Activated T-helper 1 cell treated with anti-CD3 and anti-CD28 coated beads, Interleukin-12 subunit alpha, Interleukin-12 subunit beta, Interleukin-2, Interleukin-4 antibody, amounts not matched to agents 30 ng/mL and 10 ng/mL and 1 ng/mL, durations not matched to agents 14 hours and 24 hours and 36 hours (primary cell): ENCODE measurements at regions of chr9 and their contacts with region 1.

Region 1: DNA sequence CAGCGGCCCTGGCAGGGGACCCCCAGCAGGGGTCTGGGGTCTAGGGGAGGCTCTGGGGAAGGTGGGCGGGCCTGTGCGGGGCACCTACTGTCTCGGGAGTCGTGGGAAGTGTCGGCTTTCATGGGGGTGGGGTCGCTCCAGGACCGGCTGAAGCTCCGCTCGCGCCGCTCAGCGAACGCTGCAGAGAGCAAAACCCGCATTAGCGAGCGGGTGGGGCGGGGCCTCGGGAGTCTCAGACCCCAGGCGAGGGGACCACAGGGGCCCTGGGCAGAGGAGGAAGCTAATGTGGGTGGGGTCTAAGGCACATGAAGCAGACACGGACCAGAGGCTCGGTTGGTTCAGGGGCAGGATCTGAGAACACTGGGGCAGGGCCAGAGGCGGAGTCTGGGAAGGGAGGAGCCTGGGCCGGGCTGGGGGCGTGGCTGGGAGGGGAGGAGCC is 5.5 kb downstream of the NSMF start:
- DNase-seq: peak; percentile 59
- H3K4me3 Mint-ChIP-seq: peak overlapping the region; percentile 49
- H3K27ac Mint-ChIP-seq: no peak overlapping the region
- H3K4me1 Mint-ChIP-seq: peaks cover 10% of the 10 kb centered on the region
- H3K27me3 Mint-ChIP-seq: no peaks in the 10 kb centered on the region

Region 2: GRCh38 chr9:137021979-137022619 is 431.6 kb before region 1 on chr9:
- intact Hi-C with region 1: loop called (anchors 5 kb)
- DNase-seq: peak; percentile 64
- H3K4me3 Mint-ChIP-seq: no peak overlapping the region
- H3K27ac Mint-ChIP-seq: peak overlapping the region; percentile 29
- H3K4me1 Mint-ChIP-seq: no peaks in the 10 kb centered on the region
- H3K27me3 Mint-ChIP-seq: no peaks in the 10 kb centered on the region

Region 3: GRCh38 chr9:137816531-137817235 is 363.0 kb after region 1 on chr9:
- intact Hi-C with region 1: no loop called
- DNase-seq: no peak
- H3K4me3 Mint-ChIP-seq: no peak overlapping the region
- H3K27ac Mint-ChIP-seq: no peak overlapping the region
- H3K4me1 Mint-ChIP-seq: no peaks in the 10 kb centered on the region
- H3K27me3 Mint-ChIP-seq: no peaks in the 10 kb centered on the region